ENCODE measurements at regions of chr11 and their contacts with region 1.

Region 1: DNA sequence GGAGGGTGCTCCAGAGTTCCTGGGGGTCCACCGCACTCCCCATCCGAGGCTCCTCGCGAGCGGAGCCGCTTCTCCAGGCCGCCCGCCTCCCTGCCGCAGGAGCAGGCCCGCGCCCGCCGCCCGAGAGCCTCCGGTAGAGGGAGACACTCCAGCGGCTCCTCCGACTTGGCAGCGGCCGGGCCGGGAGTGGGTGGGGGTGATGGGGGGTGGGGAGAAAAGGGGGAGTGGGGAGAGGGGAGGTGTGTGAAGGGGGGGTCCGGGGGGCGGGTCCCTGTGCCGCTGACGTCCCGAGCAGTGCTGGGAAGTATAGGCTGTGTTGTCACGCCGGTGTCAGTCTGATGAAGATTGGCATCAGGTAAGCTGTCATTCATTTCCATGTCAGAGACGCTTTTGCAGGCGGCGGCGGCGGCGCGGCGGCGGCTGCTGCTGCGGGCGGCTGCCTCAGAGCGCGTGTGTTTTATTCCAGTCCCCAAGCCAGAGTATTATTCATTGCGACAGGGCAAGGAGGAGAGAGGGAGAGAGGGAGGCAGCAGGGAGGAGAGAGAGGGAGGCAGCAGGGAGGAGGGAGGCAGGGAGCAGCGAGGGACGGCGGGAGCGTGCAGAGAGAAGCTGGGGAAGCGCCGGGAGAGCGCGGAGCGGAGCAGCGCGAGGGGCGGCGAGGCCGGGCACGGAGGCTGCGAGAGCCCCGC is at the start of gene PKNOX2:
- DNase-seq: peak; percentile 90
- ATAC-seq: peak; percentile 84
- total RNA-seq, gene PKNOX2: 7.6 TPM

Region 2: DNA sequence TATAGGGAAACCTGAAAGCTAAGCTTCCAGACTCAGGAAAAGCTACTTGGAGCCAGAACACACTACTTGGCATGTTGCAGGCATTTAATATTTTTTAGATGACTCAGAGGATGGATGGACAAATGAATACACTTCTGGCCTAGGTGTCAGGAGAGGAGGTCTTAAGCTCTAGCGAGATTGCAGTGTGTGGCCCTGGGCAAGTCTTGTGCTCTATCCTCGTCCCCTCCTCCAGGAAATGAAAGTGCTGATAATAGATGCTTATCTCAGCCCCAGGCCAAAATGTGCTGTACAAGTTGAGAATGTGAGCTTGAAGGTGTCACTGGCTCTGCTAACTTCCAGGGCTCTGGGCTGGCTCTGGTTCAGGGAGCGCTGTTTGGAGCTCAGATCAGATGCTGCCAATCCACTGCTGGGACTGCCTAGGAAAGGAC is 136.2 kb after region 1 on chr11:
- intact Hi-C with region 1: no loop called
- DNase-seq: peak; percentile 54
- ATAC-seq: peak; percentile 70

Region 3: DNA sequence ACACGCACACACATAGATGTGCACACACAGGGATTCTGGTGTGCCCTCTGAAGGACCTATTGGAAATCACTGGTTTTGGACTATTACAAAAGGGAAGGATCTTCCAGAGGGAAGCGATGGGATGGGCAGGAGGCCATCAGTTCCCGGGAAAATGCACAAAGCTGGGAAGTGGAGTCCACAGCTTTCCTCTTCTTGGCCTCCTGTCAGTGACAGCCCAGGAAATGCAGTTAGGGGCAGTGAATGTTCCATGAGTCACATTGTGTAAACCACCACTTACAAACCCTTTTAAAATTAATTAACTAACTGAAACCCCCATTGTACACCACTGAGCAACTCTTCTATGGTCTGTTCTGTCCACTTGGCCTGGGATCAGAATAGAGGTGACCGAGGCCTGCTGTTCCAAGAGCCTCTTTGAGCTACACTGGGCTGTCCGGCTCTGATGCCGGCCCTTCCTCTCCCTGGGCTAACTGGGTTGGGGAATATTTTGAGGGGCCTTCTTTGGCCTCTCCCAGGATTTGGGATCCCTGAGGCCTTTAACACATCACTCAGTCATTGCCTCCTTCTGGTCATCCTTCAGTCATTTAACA is 193.8 kb after region 1 on chr11:
- intact Hi-C with region 1: loop called (anchors 10 kb)
- DNase-seq: no peak
- ATAC-seq: no peak

Region 4: GRCh38 chr11:125376117-125376516 is 211.6 kb after region 1 on chr11:
- intact Hi-C with region 1: no loop called
- DNase-seq: peak; percentile 87
- ATAC-seq: peak; percentile 96

Region 5: DNA sequence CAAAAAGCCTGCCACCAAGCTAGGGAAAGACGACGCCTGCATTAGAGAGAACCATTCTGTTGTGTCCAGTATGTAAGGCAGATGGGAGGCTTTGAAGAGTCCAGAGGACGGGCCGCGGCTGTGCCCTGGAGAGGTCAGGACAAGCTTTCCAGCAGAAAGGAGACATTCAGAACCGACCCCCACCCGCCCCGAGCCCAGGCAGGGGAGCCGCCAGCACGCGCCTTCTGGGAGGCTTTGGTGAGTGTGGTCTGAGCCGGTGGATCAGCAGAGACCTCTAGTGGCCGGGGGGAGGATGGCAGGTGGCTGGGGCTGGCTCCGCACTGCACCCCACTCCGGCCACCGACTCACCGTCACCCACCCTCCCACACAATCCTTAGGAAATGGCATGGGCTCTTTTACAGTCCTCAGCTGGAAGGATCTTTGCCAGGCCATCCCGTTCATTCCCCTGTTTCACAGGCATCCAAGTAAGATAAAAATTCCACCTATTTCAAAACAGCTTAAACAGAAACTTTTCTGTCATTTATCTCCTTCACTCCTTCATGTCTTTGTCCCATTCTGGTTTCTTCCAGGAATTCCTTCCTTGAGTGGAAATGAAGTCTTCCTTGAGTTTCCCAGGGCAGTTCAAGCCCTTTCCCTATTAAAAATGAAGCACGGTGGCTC is 240.3 kb after region 1 on chr11:
- intact Hi-C with region 1: loop called (anchors 10 kb)
- DNase-seq: peak; percentile 81
- ATAC-seq: peak; percentile 86